Calu3 (cell line): ENCODE measurements at regions of chr9 and their contacts with region 1.

Region 1: DNA sequence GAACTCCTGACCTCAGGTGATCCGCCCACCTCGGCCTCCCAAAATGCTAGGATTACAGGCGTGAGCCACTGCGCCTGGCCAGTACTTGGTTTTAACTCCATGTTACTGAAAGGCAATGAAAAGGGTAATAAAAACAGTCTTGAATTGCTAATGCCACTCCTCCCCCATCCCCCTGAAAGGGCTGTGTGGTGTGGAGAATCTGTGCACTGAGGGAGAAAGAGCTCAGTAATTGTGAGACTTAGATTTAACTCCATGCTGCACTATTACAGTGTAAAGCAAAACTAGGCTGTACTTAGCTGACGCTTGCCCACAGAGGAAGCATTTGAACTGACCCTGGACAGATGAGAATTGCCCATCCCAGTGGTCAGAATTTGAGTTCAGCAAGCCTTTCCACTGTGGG is 1662.4 kb upstream of the ACO1 start:
- DNase-seq: no peak
- H3K4me3 Mint-ChIP-seq: no peak overlapping the region
- H3K27ac Mint-ChIP-seq: no peak overlapping the region
- H3K4me1 Mint-ChIP-seq: no peaks in the 10 kb centered on the region
- H3K27me3 Mint-ChIP-seq: no peaks in the 10 kb centered on the region
- CTCF ChIP-seq: no peak

Region 2: GRCh38 chr9:30258079-30258478 is 464.0 kb before region 1 on chr9:
- CTCF ChIA-PET with region 1: interaction called, 12 read pairs
- intact Hi-C with region 1: no loop called
- DNase-seq: no peak
- H3K4me3 Mint-ChIP-seq: no peak overlapping the region
- H3K27ac Mint-ChIP-seq: no peak overlapping the region
- H3K4me1 Mint-ChIP-seq: no peaks in the 10 kb centered on the region
- H3K27me3 Mint-ChIP-seq: no peaks in the 10 kb centered on the region
- CTCF ChIP-seq: no peak